ENCODE measurements at regions of chr2 and their contacts with region 1.

Region 1: DNA sequence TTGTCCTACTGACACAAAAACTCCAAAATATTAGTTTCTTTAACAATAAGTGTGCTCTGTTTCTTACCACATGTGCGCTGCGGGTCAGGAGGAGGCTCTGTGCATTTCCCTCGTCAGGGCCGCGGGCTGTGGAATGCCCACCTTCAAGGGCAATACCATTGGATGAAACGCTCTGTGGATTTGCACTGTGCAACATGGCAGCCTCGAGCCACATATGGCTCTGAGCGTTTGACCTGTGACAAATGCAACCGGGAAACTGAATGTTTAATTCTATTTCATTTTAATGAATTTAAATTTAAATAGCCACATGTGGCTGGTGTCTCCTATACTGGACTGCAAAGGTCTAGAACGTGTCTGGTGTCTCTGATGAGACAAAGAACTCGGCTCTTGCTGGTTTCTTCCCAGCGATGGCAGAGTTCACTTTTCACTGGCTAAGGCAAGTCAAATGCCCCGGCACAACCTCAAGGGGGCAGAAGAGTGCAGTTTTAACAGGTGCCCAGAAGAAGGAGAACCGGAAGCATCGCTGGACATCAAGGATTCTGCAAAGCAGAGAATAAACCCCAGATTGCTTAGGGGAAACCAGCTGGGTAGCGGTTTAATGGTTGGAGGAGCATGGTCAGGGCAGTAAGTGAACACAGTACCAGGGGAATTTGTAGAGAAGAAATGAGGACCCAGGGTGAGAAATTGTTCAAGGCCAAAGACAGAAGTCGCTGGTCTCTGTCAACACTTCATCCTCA is 37.0 kb upstream of the TMEM18 start:
- DNase-seq: peak; percentile 34 to 77
- H3K4me3 ChIP-seq: no peak overlapping the region
- H3K27ac ChIP-seq: no peak overlapping the region
- H3K4me1 ChIP-seq: peaks cover 0 to 10% (median 4%) of the 10 kb centered on the region in 4 experiments; a peak in 4 of 7 replicates
- H3K27me3 ChIP-seq: no peaks in the 10 kb centered on the region
- CTCF ChIP-seq: peak; percentile 76 to 91 (median 87)
- EP300 ChIP-seq: no peak
- POLR2A ChIP-seq: no peak
- RAD21 ChIP-seq: peak; percentile 85 to 91

Region 2: GRCh38 chr2:628651-629050 is 85.5 kb before region 1 on chr2:
- CTCF ChIA-PET with region 1: no interaction called
- POLR2A ChIA-PET with region 1: no interaction called
- DNase-seq: peak in 1 of 2 experiments; percentile 38
- H3K4me3 ChIP-seq: no peak overlapping the region
- H3K27ac ChIP-seq: no peak overlapping the region
- H3K4me1 ChIP-seq: peaks cover 0 to 3% (median 0%) of the 10 kb centered on the region in 4 experiments; a peak in 1 of 7 replicates
- H3K27me3 ChIP-seq: no peaks in the 10 kb centered on the region
- CTCF ChIP-seq: no peak
- EP300 ChIP-seq: no peak
- POLR2A ChIP-seq: no peak
- RAD21 ChIP-seq: no peak

Region 3: GRCh38 chr2:677056-677965 is 36.9 kb before region 1 on chr2 and contains the start of gene TMEM18:
- CTCF ChIA-PET with region 1: interaction called, 10 read pairs
- POLR2A ChIA-PET with region 1: interaction called, 3 read pairs
- DNase-seq: peak; percentile 88 to 97
- H3K4me3 ChIP-seq: peak within 1 kb of the TSS; percentile 79 to 93 (median 85)
- H3K27ac ChIP-seq: peak within 1 kb of the TSS; percentile 98
- H3K4me1 ChIP-seq: peaks cover 2 to 14% (median 8%) of the 10 kb centered on the region in 4 experiments
- H3K27me3 ChIP-seq: no peaks in the 10 kb centered on the region
- CTCF ChIP-seq: peak in 2 of 3 experiments; percentile 6 to 37; a peak in 2 of 4 replicates
- EP300 ChIP-seq: no peak
- POLR2A ChIP-seq: peak; percentile 88 to 94
- RAD21 ChIP-seq: peak; percentile 11 to 16; a peak in 2 of 4 replicates
- total RNA-seq, gene TMEM18: 22.3 and 27.1 TPM in 2 replicates

Region 4: DNA sequence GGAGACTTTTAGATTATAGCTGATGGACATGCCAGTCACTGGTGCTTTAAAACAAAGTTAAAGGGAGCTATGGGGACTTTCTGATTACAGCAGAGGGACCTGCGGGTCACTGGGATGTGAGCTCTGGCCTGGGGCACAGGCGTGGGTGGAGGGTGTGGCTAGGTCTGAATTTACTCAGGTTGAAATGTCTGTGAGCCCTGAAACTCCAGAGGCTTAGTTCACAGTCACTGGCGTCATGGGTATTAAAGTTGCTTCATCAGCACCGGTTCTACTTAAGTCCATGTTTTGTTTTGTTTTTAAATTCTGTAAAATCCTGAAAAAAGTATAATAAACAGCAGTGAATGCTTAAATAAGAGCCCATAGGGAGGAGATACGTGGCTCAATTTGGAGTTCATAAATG is 12.0 kb after region 1 on chr2:
- CTCF ChIA-PET with region 1: interaction called, 34 read pairs
- POLR2A ChIA-PET with region 1: interaction called, 14 read pairs
- DNase-seq: no peak
- H3K4me3 ChIP-seq: no peak overlapping the region
- H3K27ac ChIP-seq: no peak overlapping the region
- H3K4me1 ChIP-seq: peaks cover 5 to 19% (median 14%) of the 10 kb centered on the region in 4 experiments
- H3K27me3 ChIP-seq: no peaks in the 10 kb centered on the region; a peak in 2 of 7 replicates
- CTCF ChIP-seq: no peak
- EP300 ChIP-seq: no peak
- POLR2A ChIP-seq: no peak
- RAD21 ChIP-seq: no peak

Region 5: DNA sequence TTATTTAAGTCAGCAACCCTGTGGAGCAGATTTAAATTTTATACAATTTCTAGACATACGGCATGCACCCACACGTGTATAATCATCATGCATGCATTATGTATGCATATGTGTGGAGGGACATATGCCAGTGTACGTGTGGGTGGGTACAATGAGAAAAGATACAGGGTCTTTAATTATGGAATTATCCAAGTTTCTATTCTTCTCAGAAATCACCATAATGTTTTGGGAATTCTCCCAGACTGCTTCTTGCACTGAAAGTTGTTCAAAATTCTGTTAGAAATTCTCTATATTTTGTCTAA is 27.0 kb after region 1 on chr2:
- CTCF ChIA-PET with region 1: interaction called, 59 read pairs
- POLR2A ChIA-PET with region 1: no interaction called
- DNase-seq: no peak
- H3K4me3 ChIP-seq: peak overlapping the region; percentile 54 to 75 (median 64)
- H3K27ac ChIP-seq: no peak overlapping the region
- H3K4me1 ChIP-seq: peaks cover 0 to 8% (median 5%) of the 10 kb centered on the region in 4 experiments; a peak in 5 of 7 replicates
- H3K27me3 ChIP-seq: no peaks in the 10 kb centered on the region
- CTCF ChIP-seq: no peak
- EP300 ChIP-seq: no peak
- POLR2A ChIP-seq: no peak
- RAD21 ChIP-seq: no peak

Region 6: DNA sequence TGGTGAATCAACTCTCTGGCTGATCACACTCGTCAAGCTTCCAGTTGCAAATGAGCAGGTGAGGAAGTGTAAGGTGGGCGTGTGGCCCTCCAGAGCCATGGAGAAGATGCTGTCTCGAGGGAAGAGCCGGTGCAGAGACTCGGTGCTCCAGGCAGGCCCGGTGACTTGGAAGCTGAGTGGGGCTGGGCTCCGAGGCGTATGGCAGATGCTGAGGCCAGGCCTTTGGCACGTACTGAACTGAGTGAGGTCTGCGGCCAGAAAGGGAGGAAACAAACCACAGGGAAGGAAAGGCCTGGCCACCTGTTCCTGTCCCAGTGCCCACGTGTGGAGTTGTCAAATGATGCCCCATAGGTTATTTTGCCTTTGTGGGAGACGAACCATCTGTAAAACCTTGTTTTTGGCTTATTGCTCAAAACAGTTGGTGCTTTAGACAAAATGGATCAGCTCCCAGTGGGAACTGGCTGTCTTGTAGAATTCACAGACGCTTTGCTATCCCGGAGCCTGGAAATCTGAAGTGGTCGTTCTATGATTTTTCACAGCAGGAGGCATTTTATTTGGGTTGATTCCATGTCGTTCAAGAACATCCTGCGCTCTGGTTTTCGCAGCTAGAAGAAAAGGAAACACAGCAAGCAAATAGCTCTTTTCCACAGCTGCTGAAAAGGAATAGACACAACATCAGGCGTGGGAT is 80.5 kb after region 1 on chr2:
- CTCF ChIA-PET with region 1: interaction called, 11 read pairs
- POLR2A ChIA-PET with region 1: no interaction called
- DNase-seq: peak in 1 of 2 experiments; percentile 24
- H3K4me3 ChIP-seq: no peak overlapping the region
- H3K27ac ChIP-seq: no peak overlapping the region
- H3K4me1 ChIP-seq: peaks cover 0 to 3% (median 0%) of the 10 kb centered on the region in 4 experiments; a peak in 1 of 7 replicates
- H3K27me3 ChIP-seq: peaks cover 0 to 3% (median 0%) of the 10 kb centered on the region in 4 experiments; a peak in 2 of 7 replicates
- CTCF ChIP-seq: no peak
- EP300 ChIP-seq: no peak
- POLR2A ChIP-seq: no peak
- RAD21 ChIP-seq: no peak

Region 7: DNA sequence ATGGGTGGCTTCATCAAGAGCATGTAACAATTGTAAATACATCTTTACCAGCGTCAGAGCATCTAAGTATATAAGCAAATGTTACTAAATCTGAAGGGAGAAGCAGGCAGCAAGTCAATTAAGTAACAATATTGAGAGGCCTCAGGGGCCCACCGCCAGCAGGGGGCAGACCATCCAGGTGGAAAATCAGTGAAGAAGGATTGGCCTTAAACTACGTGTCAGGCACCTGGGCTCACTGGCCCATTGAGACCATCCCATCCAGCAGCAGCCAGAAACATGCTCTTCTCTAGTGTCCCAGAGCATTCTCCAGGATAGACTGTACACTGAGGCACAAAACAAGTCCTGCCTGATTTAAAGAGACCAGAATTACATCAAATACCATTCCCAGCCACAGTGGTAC is 140.3 kb after region 1 on chr2:
- CTCF ChIA-PET with region 1: interaction called, 41 read pairs
- POLR2A ChIA-PET with region 1: no interaction called
- DNase-seq: peak in 1 of 2 experiments; percentile 95
- H3K4me3 ChIP-seq: no peak overlapping the region
- H3K27ac ChIP-seq: no peak overlapping the region
- H3K4me1 ChIP-seq: no peaks in the 10 kb centered on the region
- H3K27me3 ChIP-seq: peaks cover 0 to 3% (median under 1%) of the 10 kb centered on the region in 4 experiments; a peak in 2 of 7 replicates
- CTCF ChIP-seq: peak; percentile 83 to 85 (median 85)
- EP300 ChIP-seq: no peak
- POLR2A ChIP-seq: no peak
- RAD21 ChIP-seq: peak; percentile 77 to 82

Measured in H1 (cell line).